ENCODE measurements at regions of chr4 and their contacts with region 1.

Region 1: DNA sequence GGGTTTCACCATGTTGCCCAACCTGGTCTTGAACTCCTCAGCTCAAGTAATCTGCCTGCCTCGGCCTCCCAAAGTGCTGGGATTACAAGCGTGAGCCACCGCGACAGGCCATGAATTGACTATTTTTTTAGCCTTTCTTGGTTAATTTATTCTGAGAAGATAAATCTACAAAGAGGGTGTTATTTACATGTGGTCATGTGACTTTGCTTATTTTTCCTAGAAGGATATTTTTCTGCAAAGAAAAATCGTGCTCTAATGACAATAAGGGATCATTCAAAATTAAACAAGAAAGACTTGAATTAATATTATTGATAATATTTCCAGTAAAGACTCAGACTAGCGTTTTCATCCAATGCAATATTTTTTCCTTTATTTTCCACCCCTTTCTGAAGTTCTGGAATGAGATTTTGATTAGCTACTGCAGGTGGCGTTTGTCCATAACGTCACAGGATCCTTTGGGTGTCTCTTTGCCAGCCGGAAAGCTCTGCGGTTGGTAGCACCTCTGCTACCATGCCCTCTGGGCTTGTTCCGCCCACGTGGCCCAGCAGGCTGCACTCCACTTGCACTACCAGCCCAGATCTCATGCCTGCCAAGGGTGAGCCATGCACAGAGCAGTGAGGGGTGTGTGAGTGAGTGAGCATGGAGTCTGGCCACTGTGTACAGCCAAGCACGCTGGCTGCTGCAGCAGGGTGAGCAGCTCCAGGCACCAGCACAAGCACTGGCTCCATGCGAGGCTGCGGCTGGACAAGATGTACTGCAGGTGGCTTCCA is 6.4 kb upstream of the HNRNPD start:
- DNase-seq: peak; percentile 61 to 84 (median 72)
- ATAC-seq: peak; percentile 96 to 98 (median 98)
- H3K4me3 ChIP-seq: no peak overlapping the region
- H3K27ac ChIP-seq: peak overlapping the region in 7 of 12 donors; percentile 24 to 70 (median 57)
- H3K4me1 ChIP-seq: peaks cover 0 to 33% (median 16%) of the 10 kb centered on the region in 12 donors
- H3K27me3 ChIP-seq: no peaks in the 10 kb centered on the region
- CTCF ChIP-seq: no peak
- POLR2A ChIP-seq: no peak

Region 2: DNA sequence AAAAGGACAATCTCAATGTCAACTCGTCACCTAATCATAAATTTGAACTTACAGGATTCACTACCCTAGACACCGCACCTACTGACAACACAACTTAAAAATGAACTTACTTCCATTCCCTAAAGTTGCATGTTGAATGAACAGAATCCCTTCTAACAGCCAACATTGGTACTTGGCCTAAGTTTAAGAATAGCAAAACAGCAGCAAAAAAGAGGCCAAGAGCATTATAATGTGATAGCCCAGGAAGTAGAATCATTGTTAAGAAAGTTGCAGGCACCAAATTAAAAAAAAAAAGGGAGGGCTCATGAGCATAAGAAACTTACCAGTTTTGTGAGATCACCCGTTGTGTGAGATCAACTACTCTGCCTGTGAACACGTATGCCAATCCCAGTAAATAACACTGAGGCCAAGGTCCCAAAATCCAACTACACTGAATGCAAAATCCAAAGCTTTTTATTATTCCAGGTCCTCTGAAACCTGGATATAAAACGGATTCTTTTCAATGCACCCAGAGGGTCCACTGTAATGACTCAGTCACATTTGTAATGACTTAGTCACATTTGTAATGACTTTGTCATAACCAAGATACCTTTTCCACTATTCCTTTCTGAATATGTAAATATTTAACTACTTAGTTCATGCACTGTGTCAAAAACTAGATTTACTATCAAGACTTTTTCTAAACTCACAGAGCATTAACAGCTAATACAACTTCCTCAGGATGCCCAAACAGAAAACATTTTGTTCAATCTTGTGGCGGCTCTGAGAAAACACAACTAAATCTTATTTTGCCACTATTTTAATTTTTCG is 43.3 kb after region 1 on chr4:
- intact Hi-C with region 1: loop called in 2 of 10 experiments (anchors 2 to 5 kb)
- DNase-seq: no peak
- ATAC-seq: no peak
- H3K4me3 ChIP-seq: no peak overlapping the region
- H3K27ac ChIP-seq: no peak overlapping the region
- H3K4me1 ChIP-seq: peaks cover 0 to 44% (median 25%) of the 10 kb centered on the region in 12 donors
- H3K27me3 ChIP-seq: no peaks in the 10 kb centered on the region
- CTCF ChIP-seq: no peak
- POLR2A ChIP-seq: no peak